Activated CD4-positive, alpha-beta memory T cell treated with anti-CD3 and anti-CD28 coated beads, Interleukin-2, amount 10 ng/mL, durations not matched to agents 7 days and 5 days (primary cell): ENCODE measurements at regions of chr10 and their contacts with region 1.

Region 1: GRCh38 chr10:12594448-12594944 is 245.1 kb downstream of the CAMK1D start:
- DNase-seq: peak; percentile 74
- H3K4me3 Mint-ChIP-seq: peak overlapping the region; percentile 36
- H3K27ac Mint-ChIP-seq: peak overlapping the region; percentile 88
- H3K4me1 Mint-ChIP-seq: peaks cover 77% of the 10 kb centered on the region
- H3K27me3 Mint-ChIP-seq: no peaks in the 10 kb centered on the region

Region 2: DNA sequence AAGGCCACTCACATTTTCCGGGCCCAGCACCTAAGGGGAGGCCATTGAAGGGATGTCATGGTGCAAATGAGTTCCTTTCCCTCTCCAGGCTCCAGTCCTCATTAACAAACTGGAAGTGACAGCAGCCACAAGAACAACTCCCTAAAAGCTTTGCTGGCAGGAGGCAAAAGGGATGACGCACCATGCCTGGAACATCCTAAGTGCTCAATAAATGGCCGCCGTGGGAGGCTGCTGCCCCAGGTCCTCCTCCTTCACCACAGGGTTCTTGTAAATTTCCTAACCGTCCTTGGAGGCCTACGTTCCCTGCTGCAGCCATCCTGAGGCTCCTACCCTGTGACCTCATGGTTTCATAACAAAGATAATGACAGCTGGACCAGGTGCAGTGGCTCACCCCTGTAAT is 286.4 kb before region 1 on chr10:
- CTCF ChIA-PET with region 1: no interaction called
- POLR2A ChIA-PET with region 1: no interaction called
- DNase-seq: no peak
- H3K4me3 Mint-ChIP-seq: no peak overlapping the region
- H3K27ac Mint-ChIP-seq: no peak overlapping the region
- H3K4me1 Mint-ChIP-seq: peaks cover 6% of the 10 kb centered on the region
- H3K27me3 Mint-ChIP-seq: peaks cover 3% of the 10 kb centered on the region

Region 3: GRCh38 chr10:12605580-12606405 is 11.3 kb after region 1 on chr10:
- CTCF ChIA-PET with region 1: interaction called, 5 read pairs
- POLR2A ChIA-PET with region 1: interaction called, 16 read pairs
- DNase-seq: peak; percentile 68
- H3K4me3 Mint-ChIP-seq: peak overlapping the region; percentile 74
- H3K27ac Mint-ChIP-seq: peak overlapping the region; percentile 95
- H3K4me1 Mint-ChIP-seq: peaks cover 22% of the 10 kb centered on the region
- H3K27me3 Mint-ChIP-seq: no peaks in the 10 kb centered on the region